PC-3 (cell line): ENCODE measurements at regions of chr1 and their contacts with region 1.

Region 1: DNA sequence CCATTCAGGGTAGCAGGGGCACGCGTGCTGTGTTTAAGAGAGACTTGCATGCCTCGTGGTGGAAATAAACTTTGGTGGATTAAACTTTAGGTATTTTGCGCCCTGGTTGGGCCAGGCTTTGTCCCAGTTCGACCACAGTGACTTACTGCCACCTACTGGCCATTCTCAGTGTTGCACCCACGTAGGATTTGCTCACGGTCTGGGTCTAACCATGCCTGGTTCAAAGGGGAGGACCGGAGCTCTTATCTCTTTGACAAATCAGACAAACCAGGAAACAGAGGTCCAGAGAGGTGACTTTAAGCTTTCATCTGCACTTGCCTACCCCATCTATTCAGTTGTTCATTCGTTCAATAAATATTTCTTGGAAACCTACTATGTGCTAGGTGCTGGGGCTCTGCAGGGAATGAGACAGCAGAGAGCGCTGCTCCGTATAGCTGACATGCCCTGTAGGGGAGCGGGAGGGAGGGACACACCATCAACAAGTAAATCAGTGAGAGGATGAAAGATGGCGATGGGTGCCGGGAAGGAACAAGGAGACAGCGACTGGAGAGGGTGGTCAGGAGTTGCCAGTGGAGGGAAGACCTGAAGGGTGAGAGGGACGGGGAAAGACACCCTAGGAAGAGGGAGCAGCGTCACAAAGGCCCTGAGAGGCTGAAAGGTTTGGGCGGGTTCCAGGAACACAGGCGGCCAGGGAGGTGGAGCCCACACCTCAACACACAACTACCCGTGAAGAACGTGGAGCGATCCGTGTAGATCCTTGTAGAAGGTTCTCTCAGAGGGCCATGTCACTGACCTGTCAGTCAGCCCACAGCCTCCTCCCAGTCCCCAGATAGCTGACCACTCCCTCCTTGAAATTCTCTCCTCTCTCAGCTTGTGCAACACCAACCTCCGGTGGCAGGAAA is 27.2 kb upstream of the TINAGL1 start:
- DNase-seq: peak; percentile 97
- ATAC-seq: peak; percentile 86
- H3K4me3 ChIP-seq: peak overlapping the region; percentile 55
- H3K27ac ChIP-seq: peak overlapping the region; percentile 74
- H3K4me1 ChIP-seq: peaks cover 24% of the 10 kb centered on the region
- H3K27me3 ChIP-seq: no peaks in the 10 kb centered on the region
- CTCF ChIP-seq: peak; percentile 96

Region 2: GRCh38 chr1:31422505-31423319 is 126.4 kb before region 1 on chr1:
- CTCF ChIA-PET with region 1: interaction called, 7 read pairs
- POLR2A ChIA-PET with region 1: no interaction called
- intact Hi-C with region 1: loop called (anchors 1 kb)
- DNase-seq: peak; percentile 94
- ATAC-seq: peak; percentile 96
- H3K4me3 ChIP-seq: peak overlapping the region; percentile 14; the same call in 1 of the 2 replicates
- H3K27ac ChIP-seq: peak overlapping the region; percentile 72
- H3K4me1 ChIP-seq: peaks cover 35% of the 10 kb centered on the region
- H3K27me3 ChIP-seq: no peaks in the 10 kb centered on the region
- CTCF ChIP-seq: peak; percentile 94

Region 3: DNA sequence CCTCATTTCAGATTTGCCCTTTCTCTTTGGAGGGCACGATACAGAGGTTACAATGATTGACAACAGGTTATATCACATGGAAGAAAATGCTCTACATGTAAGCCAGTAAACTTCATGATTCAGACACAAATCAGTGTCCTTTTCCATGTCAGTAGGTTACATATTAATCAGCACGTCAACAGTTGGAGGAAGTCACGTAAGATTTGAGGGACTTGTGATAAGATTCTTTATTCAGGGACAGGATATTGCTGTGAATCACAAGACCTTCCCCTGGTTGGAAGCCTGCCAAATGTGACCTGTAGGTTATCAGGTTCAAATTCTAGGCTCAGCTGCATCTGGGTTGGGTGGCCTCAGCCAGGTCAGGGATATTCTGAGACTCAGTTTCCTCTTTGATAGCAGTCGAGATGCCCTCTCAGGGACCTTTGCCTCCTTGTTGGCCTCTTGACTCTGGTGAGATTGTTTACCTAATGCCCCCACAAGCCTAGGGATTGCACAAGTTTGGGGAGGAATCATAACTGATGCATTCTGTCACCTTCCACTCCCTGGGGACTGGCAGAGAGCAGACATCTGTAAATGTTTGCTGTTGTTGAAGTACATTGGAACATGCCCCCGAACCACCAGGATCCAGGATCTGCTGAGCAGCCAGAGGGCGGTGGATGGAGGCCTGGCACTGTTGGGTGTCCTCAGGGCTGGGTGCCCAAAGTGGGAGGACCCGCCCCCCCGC is 104.3 kb before region 1 on chr1:
- CTCF ChIA-PET with region 1: no interaction called
- POLR2A ChIA-PET with region 1: no interaction called
- intact Hi-C with region 1: no loop called
- DNase-seq: no peak
- ATAC-seq: no peak
- H3K4me3 ChIP-seq: no peak overlapping the region
- H3K27ac ChIP-seq: no peak overlapping the region
- H3K4me1 ChIP-seq: no peaks in the 10 kb centered on the region
- H3K27me3 ChIP-seq: 0 out of 2 replicates have a peak, but pooled peaks cover 2% of the 10 kb centered on the region
- CTCF ChIP-seq: no peak

Region 4: DNA sequence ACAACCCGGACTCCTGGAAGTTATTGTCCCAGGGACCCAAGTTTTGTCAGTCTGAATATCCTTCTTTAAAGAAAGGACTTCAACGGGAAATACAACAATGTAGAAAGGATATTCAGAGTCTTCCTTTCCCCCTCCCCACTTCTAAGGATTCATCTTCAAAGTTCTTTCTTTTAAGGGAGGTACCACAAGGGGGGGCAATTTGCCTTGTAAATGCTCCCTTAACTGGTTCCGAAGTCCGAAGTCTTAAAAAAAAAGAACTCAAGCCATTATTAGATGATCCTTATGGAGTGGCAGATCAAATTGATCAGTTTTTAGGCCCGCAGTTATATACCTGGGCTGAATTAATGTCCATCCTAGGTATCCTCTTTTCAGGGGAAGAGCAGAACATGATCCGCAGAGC is 89.1 kb before region 1 on chr1:
- CTCF ChIA-PET with region 1: no interaction called
- POLR2A ChIA-PET with region 1: no interaction called
- intact Hi-C with region 1: loop called (anchors 2 kb)
- DNase-seq: peak; percentile 27
- ATAC-seq: no peak
- H3K4me3 ChIP-seq: no peak overlapping the region
- H3K27ac ChIP-seq: no peak overlapping the region
- H3K4me1 ChIP-seq: no peaks in the 10 kb centered on the region
- H3K27me3 ChIP-seq: no peaks in the 10 kb centered on the region
- CTCF ChIP-seq: peak; percentile 55

Region 5: DNA sequence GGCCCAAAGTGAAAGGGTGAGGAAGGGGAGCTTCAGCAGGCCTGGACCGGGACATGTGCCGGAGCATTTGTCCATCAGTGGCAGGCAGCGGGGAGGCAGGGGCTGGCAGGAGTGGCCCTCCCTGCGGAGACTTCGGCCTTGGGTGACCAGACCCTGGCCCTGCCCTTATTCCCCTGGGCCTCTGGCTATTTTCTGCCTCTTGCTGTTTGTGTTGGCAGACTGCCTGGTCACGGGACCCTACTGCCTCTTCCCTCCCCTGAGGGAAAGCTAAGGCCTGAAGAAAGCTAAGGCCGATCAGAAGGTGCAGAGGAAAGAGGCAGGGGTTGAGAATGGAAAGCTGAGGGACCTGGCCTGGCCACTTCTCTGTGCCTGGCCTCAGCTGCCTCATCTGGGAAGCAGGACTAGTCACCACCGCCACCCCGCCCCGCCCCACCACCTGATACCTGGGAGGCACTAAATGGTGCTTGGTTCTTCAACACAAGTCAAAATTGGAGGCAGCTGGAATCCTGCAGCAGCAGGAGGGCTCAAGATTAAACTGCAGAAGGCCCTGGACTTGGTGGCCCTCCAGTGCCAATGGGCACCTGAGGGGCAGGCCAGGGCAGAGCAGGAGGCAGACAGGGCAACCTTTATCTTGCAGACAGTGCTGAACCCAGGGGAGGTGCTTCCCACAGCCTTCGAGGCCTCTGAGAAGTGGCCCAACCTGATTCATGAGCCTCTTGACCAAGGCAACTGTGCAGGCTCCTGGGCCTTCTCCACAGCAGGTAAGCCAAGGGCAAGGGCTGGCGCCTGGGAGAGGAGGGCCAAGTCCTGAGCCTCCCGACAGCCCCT is 35.1 kb after region 1 on chr1:
- CTCF ChIA-PET with region 1: no interaction called
- POLR2A ChIA-PET with region 1: no interaction called
- intact Hi-C with region 1: no loop called
- DNase-seq: peak; percentile 35
- ATAC-seq: no peak
- H3K4me3 ChIP-seq: no peak overlapping the region
- H3K27ac ChIP-seq: peak overlapping the region; percentile 14; the same call in 1 of the 2 replicates
- H3K4me1 ChIP-seq: peaks cover 73% of the 10 kb centered on the region
- H3K27me3 ChIP-seq: no peaks in the 10 kb centered on the region
- CTCF ChIP-seq: no peak